Heart right ventricle (tissue), 16 donors: ENCODE measurements at regions of chr6 and their contacts with region 1.

Region 1: DNA sequence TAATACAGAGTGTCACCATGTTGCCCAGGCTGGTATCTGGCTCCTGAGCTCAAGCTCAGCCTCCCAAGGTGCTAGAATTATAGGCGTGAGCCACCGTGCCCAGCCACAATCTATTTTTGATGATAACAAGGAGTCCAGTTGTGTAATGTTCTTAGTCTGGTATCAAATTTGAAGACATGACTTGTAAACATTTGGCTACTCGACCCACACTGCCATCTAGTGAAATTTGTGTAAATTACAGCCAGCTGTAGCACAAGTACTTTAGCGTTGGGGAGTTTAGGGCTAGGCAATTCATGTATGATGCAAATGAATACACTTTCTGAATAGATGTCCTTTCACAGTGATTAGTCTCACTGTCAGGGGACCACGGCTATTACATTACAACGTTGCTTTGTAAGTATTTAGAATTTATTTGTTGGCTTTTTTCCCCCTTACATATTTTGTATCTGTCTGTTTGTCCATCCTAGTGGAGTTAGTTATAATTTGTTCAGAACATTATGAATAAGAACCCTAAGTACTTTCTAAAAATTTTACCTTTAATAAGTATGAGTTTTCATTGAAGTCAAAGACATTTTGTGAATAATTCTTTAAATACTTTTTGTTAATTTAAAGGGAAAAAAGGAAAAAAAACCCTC is 139.7 kb downstream of the PRDM13 start:
- DNase-seq: peak in 1 of 2 donors; percentile 41
- ATAC-seq: peak in 6 of 8 donors; percentile 59 to 75 (median 66)
- H3K4me3 ChIP-seq: no peak overlapping the region
- H3K27ac ChIP-seq: no peak overlapping the region
- H3K4me1 ChIP-seq: peaks cover 0 to 7% (median 0%) of the 10 kb centered on the region in 9 donors
- H3K27me3 ChIP-seq: peaks cover 0 to 34% (median 16%) of the 10 kb centered on the region in 7 donors
- CTCF ChIP-seq: peak; percentile 69 to 89 (median 81)

Region 2: GRCh38 chr6:99588618-99589289 is 157.6 kb before region 1 on chr6:
- intact Hi-C with region 1: loop called in 4 of 10 experiments (anchors 5 to 10 kb)
- DNase-seq: peak; percentile 26 to 57
- ATAC-seq: peak; percentile 86 to 97 (median 92)
- H3K4me3 ChIP-seq: peak overlapping the region; percentile 12 to 70 (median 56)
- H3K27ac ChIP-seq: no peak overlapping the region
- H3K4me1 ChIP-seq: peaks cover 0 to 45% (median 27%) of the 10 kb centered on the region in 9 donors
- H3K27me3 ChIP-seq: peaks cover 29 to 86% (median 70%) of the 10 kb centered on the region in 7 donors
- CTCF ChIP-seq: peak in 7 of 9 donors; percentile 42 to 63 (median 52)

Region 3: GRCh38 chr6:99603421-99604165 is 142.8 kb before region 1 on chr6:
- intact Hi-C with region 1: loop called in 2 of 10 experiments (anchors 10 kb)
- DNase-seq: peak in 1 of 2 donors; percentile 23
- ATAC-seq: peak; percentile 38 to 56 (median 48)
- H3K4me3 ChIP-seq: peak overlapping the region; percentile 6 to 51 (median 38)
- H3K27ac ChIP-seq: no peak overlapping the region
- H3K4me1 ChIP-seq: peaks cover 4 to 44% (median 25%) of the 10 kb centered on the region in 9 donors
- H3K27me3 ChIP-seq: peaks cover 39 to 100% (median 100%) of the 10 kb centered on the region in 7 donors
- CTCF ChIP-seq: no peak

Region 4: DNA sequence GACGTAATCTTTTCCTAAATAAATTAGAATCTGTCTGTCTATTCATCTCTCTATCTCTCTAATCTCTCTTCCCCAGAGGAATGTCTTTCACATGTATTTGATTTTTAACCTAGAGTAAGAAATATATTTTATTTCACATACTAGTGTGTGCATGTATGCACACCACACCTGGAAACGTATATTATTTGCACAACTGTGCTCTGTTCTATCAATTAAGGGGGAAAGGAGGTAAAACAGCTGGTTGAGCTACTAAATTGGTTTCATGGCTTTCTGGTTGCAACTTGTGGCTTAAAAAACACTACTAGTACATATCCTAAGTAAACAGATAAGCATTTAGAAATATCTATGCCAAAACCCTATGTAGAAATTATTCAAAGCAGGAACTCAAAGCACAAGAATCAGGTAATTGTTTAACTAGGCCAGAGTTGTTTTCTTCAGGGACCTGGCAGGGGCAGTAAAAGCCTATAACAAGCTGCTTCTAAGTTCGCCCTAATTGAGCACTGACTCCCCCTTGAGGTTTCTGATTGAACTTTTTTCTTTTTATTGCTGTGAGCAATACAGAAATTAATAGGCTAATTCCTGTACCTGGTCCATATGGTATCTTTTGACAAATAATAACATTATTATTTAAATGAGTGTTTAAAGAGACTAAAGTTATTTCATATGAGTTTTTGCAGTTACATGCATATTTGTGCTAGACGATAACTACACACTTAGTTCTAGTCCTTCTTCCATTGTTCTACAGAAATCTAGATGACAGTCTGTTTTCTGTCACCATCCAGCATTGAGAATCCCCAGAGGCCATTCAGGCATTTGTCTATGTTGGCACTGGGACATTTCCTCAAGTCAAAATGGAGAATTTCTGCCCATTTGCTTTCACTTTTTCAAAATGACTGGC is 159.1 kb after region 1 on chr6:
- intact Hi-C with region 1: no loop called
- DNase-seq: no peak
- ATAC-seq: peak in 1 of 8 donors; percentile 41
- H3K4me3 ChIP-seq: no peak overlapping the region
- H3K27ac ChIP-seq: no peak overlapping the region
- H3K4me1 ChIP-seq: no peaks in the 10 kb centered on the region
- H3K27me3 ChIP-seq: peaks cover 0 to 11% (median 0%) of the 10 kb centered on the region in 7 donors
- CTCF ChIP-seq: peak in 8 of 9 donors; percentile 15 to 55 (median 46)